ENCODE measurements at regions of chr11 and their contacts with region 1.

Region 1: DNA sequence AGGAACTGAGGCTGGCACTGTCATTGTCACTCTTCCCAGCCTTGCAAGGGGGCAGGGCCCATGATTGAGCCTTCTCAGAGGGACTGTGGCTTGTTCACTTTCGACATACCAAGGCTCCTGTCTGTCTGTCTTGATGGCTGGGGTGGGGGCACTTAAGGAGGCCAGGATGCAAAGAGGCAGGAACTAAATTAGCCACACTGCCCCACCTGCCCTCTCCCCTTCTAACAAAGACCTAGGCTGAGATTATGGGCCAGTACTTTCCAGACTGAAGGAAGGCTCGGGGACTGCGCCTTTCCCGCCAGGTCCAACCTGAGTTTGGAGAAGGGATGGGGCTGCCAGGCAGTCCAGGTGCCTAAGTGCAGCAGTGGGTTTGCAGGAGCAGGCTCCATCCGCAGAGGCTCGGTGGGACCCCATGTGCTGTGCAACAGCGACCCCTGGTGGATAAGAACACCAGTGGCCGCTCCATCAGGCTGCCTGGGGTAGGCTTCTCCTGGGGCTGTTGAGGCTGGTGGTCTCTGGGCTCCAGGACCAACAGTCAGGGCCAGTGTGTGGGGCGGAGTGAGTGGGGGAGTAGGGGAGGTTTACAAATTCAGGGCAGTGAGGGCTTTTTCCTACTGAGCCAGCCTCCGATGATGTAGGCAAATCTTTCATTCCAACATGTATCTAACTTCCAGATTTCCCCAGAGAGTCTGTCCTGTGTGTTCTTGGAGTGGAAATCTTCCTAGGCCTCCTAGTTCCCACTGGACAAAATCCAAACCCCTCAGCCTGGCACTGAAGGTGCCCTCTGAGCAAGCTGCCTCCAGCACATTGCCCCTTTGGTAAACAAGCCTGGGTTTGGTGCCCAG is 93.9 kb downstream of the INSC start:
- DNase-seq: peak; percentile 81
- ATAC-seq: peak; percentile 92
- H3K4me3 ChIP-seq: no peak overlapping the region
- H3K4me3 Mint-ChIP-seq: no peak overlapping the region
- H3K27ac ChIP-seq: no peak overlapping the region
- H3K27ac Mint-ChIP-seq: no peak overlapping the region
- H3K4me1 ChIP-seq: no peaks in the 10 kb centered on the region
- H3K4me1 Mint-ChIP-seq: no peaks in the 10 kb centered on the region
- H3K27me3 ChIP-seq: peaks cover 0 to 17% (median 0%) of the 10 kb centered on the region in 4 experiments
- H3K27me3 Mint-ChIP-seq: peaks cover 19% of the 10 kb centered on the region
- CTCF ChIP-seq: peak; percentile 89

Region 2: GRCh38 chr11:14949437-14950147 is 259.0 kb before region 1 on chr11:
- CTCF ChIA-PET with region 1: no interaction called
- POLR2A ChIA-PET with region 1: no interaction called
- intact Hi-C with region 1: no loop called
- DNase-seq: no peak
- ATAC-seq: no peak
- H3K4me3 ChIP-seq: no peak overlapping the region
- H3K4me3 Mint-ChIP-seq: no peak overlapping the region
- H3K27ac ChIP-seq: no peak overlapping the region
- H3K27ac Mint-ChIP-seq: no peak overlapping the region
- H3K4me1 ChIP-seq: no peaks in the 10 kb centered on the region
- H3K4me1 Mint-ChIP-seq: no peaks in the 10 kb centered on the region
- H3K27me3 ChIP-seq: no peaks in the 10 kb centered on the region
- H3K27me3 Mint-ChIP-seq: peaks cover 11% of the 10 kb centered on the region
- CTCF ChIP-seq: no peak

Region 3: DNA sequence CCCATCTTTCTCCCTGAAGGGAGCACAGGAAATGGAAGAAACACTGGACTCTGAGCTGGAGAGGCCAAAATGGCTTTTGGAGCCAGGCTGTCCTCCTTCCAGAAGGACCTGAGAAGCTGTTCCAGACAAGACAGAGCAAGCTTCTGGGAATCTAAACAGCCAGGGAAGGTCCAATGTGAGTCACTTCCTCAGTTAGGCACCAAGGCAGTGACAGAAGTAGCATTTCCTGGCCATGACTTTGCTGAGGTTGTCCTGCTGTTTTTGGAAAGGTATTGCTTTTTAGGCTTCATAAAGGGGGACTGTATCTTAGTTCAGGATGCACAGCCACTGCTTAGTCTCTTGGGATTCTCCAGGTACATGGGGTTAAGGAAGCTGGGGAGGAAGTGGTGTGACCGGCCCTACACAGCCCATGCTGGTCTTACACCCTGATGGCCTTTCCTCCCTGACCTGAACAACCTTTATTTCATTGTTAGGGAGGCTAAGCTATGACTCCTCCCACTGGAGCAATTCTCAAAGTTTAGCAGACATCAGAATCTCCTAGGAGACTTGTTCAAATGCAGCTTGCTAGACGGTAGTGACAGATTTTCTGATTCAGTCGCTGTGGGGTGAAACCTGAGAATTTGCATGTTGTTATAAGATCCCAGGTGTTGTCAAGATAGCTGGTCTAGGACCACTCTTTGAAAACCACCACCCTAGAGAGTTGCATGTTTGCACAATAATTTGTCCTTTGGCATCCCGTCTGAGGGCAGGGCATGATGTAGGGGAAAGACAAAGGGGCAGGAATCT is 100.7 kb before region 1 on chr11:
- CTCF ChIA-PET with region 1: interaction called, 290 read pairs
- POLR2A ChIA-PET with region 1: no interaction called
- intact Hi-C with region 1: no loop called
- DNase-seq: peak; percentile 41
- ATAC-seq: peak; percentile 63
- H3K4me3 ChIP-seq: no peak overlapping the region
- H3K4me3 Mint-ChIP-seq: peak overlapping the region; percentile 17
- H3K27ac ChIP-seq: no peak overlapping the region
- H3K27ac Mint-ChIP-seq: peak overlapping the region; percentile 43
- H3K4me1 ChIP-seq: peaks cover 49 to 68% of the 10 kb centered on the region in 2 donors
- H3K4me1 Mint-ChIP-seq: peaks cover 70% of the 10 kb centered on the region
- H3K27me3 ChIP-seq: no peaks in the 10 kb centered on the region
- H3K27me3 Mint-ChIP-seq: no peaks in the 10 kb centered on the region
- CTCF ChIP-seq: no peak

Region 4: DNA sequence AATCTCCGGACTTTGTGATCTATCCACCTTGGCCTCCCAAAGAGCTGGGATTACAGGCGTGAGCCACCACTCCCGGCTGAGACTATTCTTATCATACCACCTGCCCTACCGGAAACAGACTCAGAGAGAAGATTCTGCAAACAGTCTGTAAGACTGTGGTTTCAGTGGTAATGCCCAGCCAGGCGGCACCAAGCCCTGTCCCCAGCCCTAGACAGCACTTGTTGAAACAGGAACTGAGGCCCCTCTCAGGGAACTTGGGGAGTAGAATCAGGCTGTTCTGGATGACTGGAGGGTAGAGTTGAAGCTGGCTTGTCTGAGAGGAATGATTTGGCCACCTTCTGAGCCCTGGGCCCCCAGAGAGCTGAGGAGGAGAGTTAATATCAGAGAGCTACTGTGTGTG is 95.2 kb before region 1 on chr11:
- CTCF ChIA-PET with region 1: interaction called, 22 read pairs
- POLR2A ChIA-PET with region 1: no interaction called
- intact Hi-C with region 1: no loop called
- DNase-seq: peak; percentile 87
- ATAC-seq: peak; percentile 92
- H3K4me3 ChIP-seq: peak overlapping the region in 1 of 5 experiments; percentile 31
- H3K4me3 Mint-ChIP-seq: peak overlapping the region; percentile 92
- H3K27ac ChIP-seq: peak overlapping the region in 1 of 2 donors; percentile 44
- H3K27ac Mint-ChIP-seq: peak overlapping the region; percentile 89
- H3K4me1 ChIP-seq: peaks cover 61 to 78% of the 10 kb centered on the region in 2 donors
- H3K4me1 Mint-ChIP-seq: peaks cover 71% of the 10 kb centered on the region
- H3K27me3 ChIP-seq: peaks cover 0 to 29% (median 8%) of the 10 kb centered on the region in 4 experiments
- H3K27me3 Mint-ChIP-seq: peaks cover 19% of the 10 kb centered on the region
- CTCF ChIP-seq: no peak